ENCODE measurements at regions of chr6 and their contacts with region 1.

Region 1: DNA sequence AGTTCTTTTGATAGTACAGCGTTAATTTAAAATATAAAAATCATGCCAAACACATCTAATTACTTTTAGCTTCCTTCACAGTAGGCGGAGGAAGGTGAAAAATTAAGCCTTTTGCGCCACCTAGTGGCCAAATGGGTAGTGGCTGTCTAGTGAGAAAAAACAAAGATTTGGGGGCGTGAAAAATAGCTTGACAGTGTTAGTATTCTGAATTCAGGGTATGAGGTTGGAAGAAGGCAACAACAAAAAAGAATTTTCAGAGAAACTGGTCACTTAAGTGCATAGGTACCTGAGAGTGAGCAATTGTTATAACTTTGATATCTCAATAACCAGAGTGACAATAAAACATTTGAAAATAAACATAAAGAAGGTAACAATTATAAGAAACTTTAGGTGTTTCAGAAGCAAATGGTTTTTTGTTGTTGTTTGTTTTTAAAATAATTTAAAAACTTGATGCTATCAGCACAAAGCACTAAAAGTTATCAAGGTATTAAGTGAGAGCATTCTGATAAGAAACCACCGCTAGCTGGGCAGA is 14.3 kb downstream of the PSMB9 start:
- DNase-seq: peak in 1 of 2 experiments; percentile 84
- H3K4me3 ChIP-seq: no peak overlapping the region
- H3K27ac ChIP-seq: no peak overlapping the region
- H3K4me1 ChIP-seq: no peaks in the 10 kb centered on the region
- H3K27me3 ChIP-seq: no peaks in the 10 kb centered on the region
- CTCF ChIP-seq: peak in 2 of 3 experiments; percentile 73 to 85; a peak in 3 of 4 replicates
- EP300 ChIP-seq: no peak
- POLR2A ChIP-seq: no peak
- RAD21 ChIP-seq: peak; percentile 91 to 92

Region 2: GRCh38 chr6:32501016-32501415 is 367.3 kb before region 1 on chr6:
- CTCF ChIA-PET with region 1: no interaction called
- POLR2A ChIA-PET with region 1: no interaction called
- DNase-seq: no peak
- H3K4me3 ChIP-seq: no peak overlapping the region
- H3K27ac ChIP-seq: no peak overlapping the region
- H3K4me1 ChIP-seq: no peaks in the 10 kb centered on the region
- H3K27me3 ChIP-seq: no peaks in the 10 kb centered on the region
- CTCF ChIP-seq: no peak
- EP300 ChIP-seq: no peak
- POLR2A ChIP-seq: no peak
- RAD21 ChIP-seq: no peak

Region 3: DNA sequence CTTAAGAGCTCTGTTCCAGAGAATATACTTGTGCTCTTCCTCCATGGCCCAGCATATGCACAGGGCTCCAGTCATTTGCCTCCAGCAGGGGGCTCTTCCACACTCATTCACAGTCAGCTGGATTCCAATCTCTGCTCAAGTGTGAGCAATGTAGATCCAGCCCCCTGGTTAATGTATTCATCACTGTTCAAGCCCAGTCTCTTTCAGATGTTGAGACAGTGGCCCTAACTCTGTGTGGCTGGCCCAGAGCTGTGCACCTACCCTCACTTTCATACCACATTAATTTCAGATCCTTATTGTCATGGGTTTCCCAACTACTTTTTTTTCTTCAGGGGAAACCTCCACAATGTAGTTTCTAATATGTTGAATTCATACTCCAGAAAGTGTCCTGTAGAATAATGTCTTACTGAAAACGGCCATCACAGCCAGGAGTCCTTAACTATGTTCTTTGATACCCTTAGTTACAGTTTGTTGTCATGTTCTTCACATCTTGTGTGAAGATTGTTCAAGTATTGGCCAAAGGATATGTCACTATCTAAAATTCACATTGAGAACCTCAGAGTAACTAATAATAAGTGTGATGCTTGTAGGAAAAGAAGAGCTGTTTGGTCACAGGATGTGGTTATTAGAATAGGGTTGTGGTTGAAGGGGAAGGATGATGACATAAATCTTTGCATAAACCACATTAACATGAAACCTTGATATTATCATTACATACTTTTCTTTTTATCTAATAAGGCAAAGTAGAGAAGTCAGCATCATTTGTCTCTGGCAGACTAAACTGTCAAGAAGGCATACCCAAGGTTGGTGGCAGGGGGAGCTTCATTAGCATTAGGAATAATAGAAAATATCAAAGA is 245.6 kb before region 1 on chr6:
- CTCF ChIA-PET with region 1: no interaction called
- POLR2A ChIA-PET with region 1: no interaction called
- DNase-seq: peak in 1 of 2 experiments; percentile 31
- H3K4me3 ChIP-seq: no peak overlapping the region
- H3K27ac ChIP-seq: no peak overlapping the region
- H3K4me1 ChIP-seq: no peaks in the 10 kb centered on the region
- H3K27me3 ChIP-seq: no peaks in the 10 kb centered on the region
- CTCF ChIP-seq: peak; percentile 15 to 54 (median 50)
- EP300 ChIP-seq: no peak
- POLR2A ChIP-seq: no peak
- RAD21 ChIP-seq: peak; percentile 34 to 55; a peak in 3 of 4 replicates

Region 4: DNA sequence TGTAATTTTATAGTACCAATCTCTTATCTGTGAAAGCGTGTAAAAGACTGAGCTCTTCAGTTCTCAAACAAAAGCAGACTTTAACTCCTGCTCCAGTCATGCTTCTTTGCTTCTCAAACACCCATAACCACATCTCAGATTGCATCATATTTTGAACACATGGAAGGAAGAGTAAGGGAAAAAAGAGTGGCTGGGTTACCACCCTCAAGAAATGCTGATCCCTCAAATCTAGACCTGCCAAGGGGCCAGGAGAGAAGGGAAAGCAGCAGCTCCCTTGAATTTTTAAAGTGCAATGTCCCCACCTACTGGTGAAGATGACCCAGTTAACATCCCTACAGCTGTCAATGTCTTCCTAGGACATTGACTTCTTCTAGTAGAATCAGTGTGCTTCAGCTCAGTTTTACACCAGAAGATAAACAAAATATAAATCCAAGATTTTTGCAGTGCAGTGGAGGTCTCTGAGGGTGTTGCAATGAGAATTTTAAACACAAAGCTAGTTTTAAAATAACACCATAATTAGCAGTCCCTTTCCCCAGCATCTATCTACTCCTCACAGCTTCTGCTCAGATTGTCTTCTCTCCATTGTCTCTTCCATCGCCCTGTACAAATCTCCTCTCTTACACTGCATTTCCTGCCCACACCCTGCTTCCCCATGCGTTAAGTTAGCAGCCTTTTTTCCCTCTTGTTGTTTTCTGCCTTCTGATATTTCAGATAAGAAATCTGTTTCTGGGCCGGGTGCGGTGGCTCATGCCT is 82.4 kb before region 1 on chr6:
- CTCF ChIA-PET with region 1: interaction called, 13 read pairs
- POLR2A ChIA-PET with region 1: no interaction called
- DNase-seq: peak in 1 of 2 experiments; percentile 49
- H3K4me3 ChIP-seq: no peak overlapping the region
- H3K27ac ChIP-seq: no peak overlapping the region
- H3K4me1 ChIP-seq: no peaks in the 10 kb centered on the region; a peak in 1 of 7 replicates
- H3K27me3 ChIP-seq: no peaks in the 10 kb centered on the region
- CTCF ChIP-seq: peak; percentile 15 to 75 (median 66)
- EP300 ChIP-seq: no peak
- POLR2A ChIP-seq: no peak
- RAD21 ChIP-seq: peak; percentile 86 to 88

Region 5: DNA sequence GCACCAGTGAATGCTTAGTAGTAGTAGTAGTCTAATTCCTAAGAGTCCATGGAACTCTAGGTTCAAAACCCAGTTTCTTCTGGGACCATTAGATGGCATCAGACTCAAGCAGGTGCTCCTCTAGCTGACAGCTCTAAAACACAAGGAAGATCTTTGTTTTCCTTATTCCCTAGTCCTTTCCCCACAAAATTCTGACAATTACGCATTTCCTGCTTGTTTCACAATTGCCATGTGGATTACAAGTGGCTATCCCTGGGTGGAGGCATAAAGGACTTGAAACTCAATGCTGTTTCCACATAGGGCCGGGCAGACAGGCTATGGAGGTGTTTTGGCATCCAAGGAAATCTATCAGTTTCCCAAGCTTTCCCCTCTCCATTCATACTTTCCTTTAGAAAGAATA is 42.4 kb before region 1 on chr6:
- CTCF ChIA-PET with region 1: interaction called, 63 read pairs
- POLR2A ChIA-PET with region 1: no interaction called
- DNase-seq: no peak
- H3K4me3 ChIP-seq: no peak overlapping the region
- H3K27ac ChIP-seq: no peak overlapping the region
- H3K4me1 ChIP-seq: peaks cover 0 to 4% (median 0%) of the 10 kb centered on the region in 4 experiments; a peak in 1 of 7 replicates
- H3K27me3 ChIP-seq: no peaks in the 10 kb centered on the region; a peak in 1 of 7 replicates
- CTCF ChIP-seq: peak in 2 of 3 experiments; percentile 56 to 63; a peak in 3 of 4 replicates
- EP300 ChIP-seq: no peak
- POLR2A ChIP-seq: no peak
- RAD21 ChIP-seq: peak; percentile 73 to 83

Region 6: GRCh38 chr6:32853541-32854375 is 14.6 kb before region 1 on chr6 and contains the starts of genes PSMB9 and TAP1:
- CTCF ChIA-PET with region 1: interaction called, 48 read pairs
- POLR2A ChIA-PET with region 1: interaction called, 3 read pairs
- DNase-seq: peak; percentile 80 to 91
- H3K4me3 ChIP-seq: peak within 1 kb of the TSS; percentile 59 to 77 (median 76)
- H3K27ac ChIP-seq: no peak within 1 kb of the TSS; the same call in 1 of the 2 replicates
- H3K4me1 ChIP-seq: peaks cover 0 to 4% (median 1%) of the 10 kb centered on the region in 4 experiments; a peak in 4 of 7 replicates
- H3K27me3 ChIP-seq: peaks cover 6 to 41% (median 36%) of the 10 kb centered on the region in 4 experiments
- CTCF ChIP-seq: peak; percentile 63 to 94 (median 75)
- EP300 ChIP-seq: peak; percentile 16 to 33; a peak in 2 of 3 replicates
- POLR2A ChIP-seq: peak in 1 of 2 experiments; percentile 42; a peak in 2 of 3 replicates
- RAD21 ChIP-seq: peak; percentile 56 to 69
- total RNA-seq, gene PSMB9: 2.9 and 4.5 TPM in 2 replicates
- total RNA-seq, gene TAP1: 16.8 TPM in 2 replicates

Region 7: DNA sequence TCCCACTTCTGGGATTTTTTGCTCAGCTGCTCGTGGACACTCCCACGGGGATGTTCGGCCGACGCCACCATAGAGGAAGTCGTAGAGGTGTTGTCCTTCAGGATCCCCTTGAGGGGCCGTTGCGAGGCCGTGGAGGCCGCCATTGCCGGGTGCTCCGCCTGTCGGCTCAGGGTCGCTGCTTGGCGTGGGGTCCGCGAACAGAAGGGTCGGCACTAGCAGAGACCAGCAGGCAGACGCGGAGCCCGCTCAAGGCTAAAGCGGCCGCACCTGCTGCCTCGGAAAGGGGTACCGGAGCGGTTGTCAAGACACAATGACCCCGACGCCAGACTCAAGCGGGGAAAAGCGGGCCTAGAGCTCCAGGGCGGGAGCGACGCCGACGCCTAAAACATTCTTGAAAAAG is 11.4 kb after region 1 on chr6:
- CTCF ChIA-PET with region 1: interaction called, 20 read pairs
- POLR2A ChIA-PET with region 1: no interaction called
- DNase-seq: no peak
- H3K4me3 ChIP-seq: no peak overlapping the region
- H3K27ac ChIP-seq: no peak overlapping the region
- H3K4me1 ChIP-seq: no peaks in the 10 kb centered on the region
- H3K27me3 ChIP-seq: no peaks in the 10 kb centered on the region
- CTCF ChIP-seq: no peak
- EP300 ChIP-seq: no peak
- POLR2A ChIP-seq: no peak
- RAD21 ChIP-seq: no peak

Region 8: DNA sequence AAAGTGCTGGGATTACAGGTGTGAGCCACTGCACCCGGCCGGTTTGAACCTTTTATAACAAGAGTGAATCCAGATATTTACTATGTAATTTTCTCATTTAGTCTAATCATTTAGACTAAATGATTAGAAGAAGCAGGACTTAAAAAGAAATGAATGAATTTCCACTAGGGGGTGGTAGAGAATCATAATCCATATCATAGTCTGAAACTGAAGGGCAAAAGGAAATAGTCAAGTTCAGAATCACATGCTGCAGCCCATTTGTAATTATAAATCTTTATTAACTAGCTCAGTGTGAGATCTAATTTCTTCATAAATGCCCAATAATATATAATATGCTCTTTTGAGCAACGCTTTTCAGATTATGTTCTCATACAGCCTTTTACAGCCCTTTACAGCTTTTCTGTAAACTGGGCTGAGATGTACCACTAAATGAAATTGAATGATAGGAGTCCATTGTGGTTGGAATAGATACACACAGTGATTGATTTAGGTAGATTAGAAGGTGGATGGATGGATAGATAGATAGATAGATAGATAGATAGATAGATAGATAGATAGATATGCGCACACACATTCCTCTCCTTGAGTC is 17.5 kb after region 1 on chr6:
- CTCF ChIA-PET with region 1: interaction called, 17 read pairs
- POLR2A ChIA-PET with region 1: no interaction called
- DNase-seq: no peak
- H3K4me3 ChIP-seq: no peak overlapping the region
- H3K27ac ChIP-seq: no peak overlapping the region
- H3K4me1 ChIP-seq: no peaks in the 10 kb centered on the region
- H3K27me3 ChIP-seq: no peaks in the 10 kb centered on the region
- CTCF ChIP-seq: peak in 2 of 3 experiments; percentile 25 to 38; a peak in 2 of 4 replicates
- EP300 ChIP-seq: no peak
- POLR2A ChIP-seq: no peak
- RAD21 ChIP-seq: peak; percentile 63 to 67

Region 9: DNA sequence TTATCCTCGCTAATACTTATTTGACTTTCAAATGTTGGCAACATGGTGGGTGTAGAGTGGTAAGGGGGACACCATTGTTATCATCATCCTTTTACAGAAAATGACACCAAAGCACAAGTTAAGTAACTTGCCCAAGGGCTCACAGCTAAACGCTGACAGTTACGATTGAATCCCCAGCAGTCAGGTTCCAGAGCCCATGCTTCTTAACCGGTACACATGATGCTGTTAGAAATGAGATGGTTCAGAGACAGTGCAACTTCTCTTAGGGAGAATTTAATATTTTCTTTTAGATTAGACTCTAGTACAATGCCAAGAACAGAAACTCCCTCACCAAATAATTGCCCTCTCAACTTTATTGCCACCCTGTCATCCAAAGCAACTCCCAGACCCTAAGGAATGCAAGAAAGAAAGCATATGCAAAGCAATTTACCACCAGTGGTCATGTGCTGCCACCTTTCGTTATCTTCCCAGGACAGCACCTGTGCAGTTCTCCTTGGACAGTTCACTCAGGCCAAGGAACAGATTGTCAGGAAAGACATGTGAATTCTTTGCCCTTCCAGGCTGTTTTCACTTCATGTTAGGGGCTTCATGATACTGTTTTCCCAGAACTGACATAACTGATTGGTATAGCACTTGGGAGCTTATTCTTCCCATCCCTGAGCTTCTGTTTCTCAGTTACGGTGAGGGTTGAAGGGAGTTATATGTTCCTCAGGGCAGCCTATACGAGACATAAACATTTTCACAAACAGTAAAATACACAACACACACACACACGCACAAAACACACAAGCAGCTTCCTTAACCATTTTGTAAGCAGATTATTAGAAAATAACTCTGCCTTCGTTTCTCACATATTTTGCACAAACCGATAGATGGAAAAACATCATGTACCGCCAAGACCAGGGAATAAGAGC is 79.5 kb after region 1 on chr6:
- CTCF ChIA-PET with region 1: interaction called, 10 read pairs
- POLR2A ChIA-PET with region 1: no interaction called
- DNase-seq: peak; percentile 15 to 63
- H3K4me3 ChIP-seq: no peak overlapping the region
- H3K27ac ChIP-seq: no peak overlapping the region
- H3K4me1 ChIP-seq: peaks cover 0 to 8% (median 3%) of the 10 kb centered on the region in 4 experiments; a peak in 5 of 7 replicates
- H3K27me3 ChIP-seq: no peaks in the 10 kb centered on the region; a peak in 1 of 7 replicates
- CTCF ChIP-seq: peak; percentile 60 to 92 (median 91)
- EP300 ChIP-seq: no peak
- POLR2A ChIP-seq: no peak
- RAD21 ChIP-seq: peak; percentile 95 to 96

Region 10: DNA sequence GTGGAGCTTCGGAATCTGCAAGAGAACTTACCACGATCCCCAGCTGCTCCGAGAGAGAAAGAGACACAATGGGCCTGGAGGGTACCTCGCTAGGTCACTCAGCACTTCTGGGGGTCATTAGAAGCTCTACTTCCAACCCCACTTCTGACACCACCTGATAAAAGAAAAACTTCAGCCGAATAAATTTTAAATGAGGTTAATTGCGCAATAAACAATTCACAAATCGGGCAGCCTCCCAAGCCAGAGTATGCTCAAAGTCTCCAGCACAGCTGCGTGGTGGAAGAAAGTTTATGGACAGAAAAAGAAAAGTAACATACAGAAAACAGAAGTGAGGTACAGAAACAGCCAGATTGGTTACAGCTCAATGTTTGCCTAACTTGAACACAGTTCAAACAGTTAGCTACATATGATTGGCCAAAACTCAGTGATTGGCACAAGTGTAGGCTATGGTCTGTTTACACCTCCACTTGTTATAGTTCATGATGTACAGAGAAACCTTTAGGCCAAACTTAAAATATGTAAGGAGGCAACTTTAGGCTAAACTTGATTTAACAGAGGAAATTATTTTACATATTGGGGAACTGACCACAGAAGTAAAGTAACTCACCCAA is 271.4 kb after region 1 on chr6:
- CTCF ChIA-PET with region 1: no interaction called
- POLR2A ChIA-PET with region 1: no interaction called
- DNase-seq: no peak
- H3K4me3 ChIP-seq: no peak overlapping the region
- H3K27ac ChIP-seq: no peak overlapping the region
- H3K4me1 ChIP-seq: no peaks in the 10 kb centered on the region
- H3K27me3 ChIP-seq: no peaks in the 10 kb centered on the region
- CTCF ChIP-seq: no peak
- EP300 ChIP-seq: no peak
- POLR2A ChIP-seq: no peak
- RAD21 ChIP-seq: no peak

Measured in H1 (cell line).